OCI-LY7 (cell line): ENCODE measurements at regions of chr3 and their contacts with region 1.

Region 1: DNA sequence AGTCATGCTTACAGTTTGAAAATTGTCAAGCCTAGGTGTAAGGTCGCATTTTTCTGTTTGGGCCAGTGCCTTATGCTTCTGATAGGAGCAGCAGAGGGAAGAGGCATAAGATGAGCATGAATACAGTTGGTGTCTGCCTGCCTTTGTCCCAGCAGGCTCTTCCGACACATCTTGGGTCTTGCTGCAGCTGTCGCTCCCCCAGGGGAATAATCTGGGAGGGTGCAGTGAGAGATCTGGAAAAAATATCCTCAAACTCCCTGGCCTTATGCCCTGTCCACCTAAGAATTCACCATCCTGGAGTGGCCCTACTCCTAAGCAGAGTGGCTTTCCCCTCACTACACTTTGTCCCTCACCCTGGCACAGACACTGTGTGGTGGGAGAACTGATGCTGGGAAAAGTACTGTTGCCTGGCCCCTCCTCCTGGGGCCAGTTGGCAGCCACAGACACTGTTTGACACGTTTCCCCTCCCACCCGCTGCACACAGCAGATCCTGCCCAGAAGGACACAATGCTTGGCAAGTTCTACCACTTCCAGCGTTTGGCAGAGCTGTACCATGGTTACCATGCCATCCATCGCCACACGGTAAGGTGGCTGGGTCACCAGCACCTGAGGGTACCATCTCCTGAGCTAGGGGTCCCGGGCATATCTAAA is 21.1 kb upstream of the RHO start:
- DNase-seq: no peak
- H3K4me3 ChIP-seq: no peak overlapping the region
- H3K27ac ChIP-seq: no peak overlapping the region
- H3K4me1 ChIP-seq: no peaks in the 10 kb centered on the region
- CTCF ChIP-seq: no peak

Region 2: DNA sequence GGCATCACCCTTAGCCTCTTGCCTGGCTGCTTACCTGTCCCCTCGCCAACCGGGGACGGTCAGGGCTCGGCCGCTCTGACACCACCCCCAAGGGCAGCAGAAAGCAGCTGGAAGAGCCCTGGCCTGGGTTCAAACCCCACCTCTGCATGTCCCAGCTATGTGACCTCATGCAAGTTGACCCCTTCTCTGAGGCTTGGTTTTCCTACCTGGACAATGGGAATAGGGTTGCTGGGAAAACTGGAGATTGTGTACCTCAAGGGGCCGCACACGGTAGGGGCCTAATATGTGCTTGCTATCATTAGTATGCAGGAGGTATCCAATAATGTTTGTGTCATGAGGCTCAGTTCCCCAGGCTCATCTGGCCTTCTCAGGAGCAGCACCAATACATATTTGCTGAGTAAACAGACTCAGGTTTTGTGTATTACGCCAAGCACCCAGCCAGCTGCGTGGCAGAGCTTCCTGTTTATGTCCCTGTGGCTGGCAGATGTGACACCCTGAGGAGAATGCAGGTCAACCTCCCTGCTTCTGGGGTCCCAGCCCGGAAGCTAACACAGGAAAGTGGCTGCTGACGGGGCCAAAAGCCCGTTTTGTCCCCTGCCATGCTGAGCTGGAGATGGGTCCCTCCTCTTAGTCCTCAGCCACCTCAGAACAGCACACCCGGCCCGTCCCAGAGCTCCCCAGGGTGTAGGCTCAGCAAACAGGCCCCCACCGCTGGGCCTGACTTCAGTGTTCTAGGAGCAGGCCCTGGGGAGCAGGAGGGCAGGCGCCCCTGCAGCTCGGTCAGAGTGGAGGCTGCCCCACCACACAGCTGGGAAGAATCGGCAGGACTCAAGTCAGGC is 69.4 kb after region 1 on chr3:
- CTCF ChIA-PET with region 1: interaction called, 10 read pairs
- POLR2A ChIA-PET with region 1: no interaction called
- intact Hi-C with region 1: no loop called
- DNase-seq: peak; percentile 98
- H3K4me3 ChIP-seq: peak overlapping the region; percentile 22
- H3K27ac ChIP-seq: peak overlapping the region; percentile 92
- H3K4me1 ChIP-seq: peaks cover 54% of the 10 kb centered on the region
- CTCF ChIP-seq: no peak